AG04450 (cell line): ENCODE measurements at regions of chr15 and their contacts with region 1.

Region 1: DNA sequence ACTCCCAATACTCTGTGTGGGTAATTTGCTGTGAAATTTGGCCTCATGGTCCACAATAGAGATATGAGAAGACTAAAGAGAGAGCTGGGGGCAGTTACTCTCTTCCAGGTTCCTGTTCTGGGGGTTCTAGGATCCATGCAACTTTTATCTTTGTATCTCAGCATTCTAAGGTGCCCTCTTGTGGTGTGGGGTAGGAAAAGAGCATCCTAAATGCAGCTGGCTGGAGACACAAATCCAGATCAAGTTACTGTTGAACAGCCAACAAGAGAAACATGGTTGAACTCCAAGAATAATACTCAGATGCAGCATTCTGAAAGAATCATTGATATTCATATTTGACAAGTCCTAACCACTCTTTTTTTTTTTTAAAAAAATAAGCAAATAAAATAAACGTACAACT is 238.2 kb downstream of the GREM1 start:
- DNase-seq: peak; percentile 81
- H3K4me3 ChIP-seq: no peak overlapping the region
- H3K27ac ChIP-seq: no peak overlapping the region
- H3K27me3 ChIP-seq: no peaks in the 10 kb centered on the region
- CTCF ChIP-seq: peak; percentile 79

Region 2: DNA sequence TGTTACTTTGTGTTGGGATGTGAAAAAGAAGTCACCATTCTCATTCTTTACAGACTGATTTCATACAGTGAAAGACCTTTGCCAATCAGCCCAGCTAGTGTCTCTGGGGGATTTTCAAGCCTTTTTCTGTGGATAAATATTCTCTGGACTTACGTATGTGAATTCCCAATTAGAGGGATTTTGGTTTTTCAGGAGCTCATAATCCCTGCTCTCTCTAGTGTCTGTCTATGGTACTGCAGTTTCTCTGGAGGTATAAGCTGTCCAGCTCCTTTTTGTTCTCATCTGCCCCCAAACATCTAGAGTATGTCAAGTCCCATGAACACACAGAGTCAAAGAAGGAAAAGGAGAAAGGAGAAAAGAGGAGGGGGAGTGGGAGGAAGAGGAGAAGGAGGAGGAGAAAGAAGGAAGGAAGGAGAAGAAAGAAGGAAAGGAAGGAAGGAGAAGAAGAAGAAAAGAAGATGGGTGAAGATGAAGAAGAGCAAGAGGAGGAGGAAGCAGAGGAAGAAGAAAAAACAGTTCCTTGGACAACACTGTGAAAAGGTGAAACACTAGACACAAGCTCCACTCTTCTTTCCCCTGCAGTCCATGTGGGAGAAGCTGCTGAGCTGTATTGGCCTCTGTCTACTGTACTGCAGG is 19.6 kb before region 1 on chr15:
- CTCF ChIA-PET with region 1: interaction called, 14 read pairs
- POLR2A ChIA-PET with region 1: no interaction called
- DNase-seq: no peak
- H3K4me3 ChIP-seq: no peak overlapping the region
- H3K27ac ChIP-seq: no peak overlapping the region
- H3K27me3 ChIP-seq: no peaks in the 10 kb centered on the region
- CTCF ChIP-seq: peak; percentile 47

Region 3: DNA sequence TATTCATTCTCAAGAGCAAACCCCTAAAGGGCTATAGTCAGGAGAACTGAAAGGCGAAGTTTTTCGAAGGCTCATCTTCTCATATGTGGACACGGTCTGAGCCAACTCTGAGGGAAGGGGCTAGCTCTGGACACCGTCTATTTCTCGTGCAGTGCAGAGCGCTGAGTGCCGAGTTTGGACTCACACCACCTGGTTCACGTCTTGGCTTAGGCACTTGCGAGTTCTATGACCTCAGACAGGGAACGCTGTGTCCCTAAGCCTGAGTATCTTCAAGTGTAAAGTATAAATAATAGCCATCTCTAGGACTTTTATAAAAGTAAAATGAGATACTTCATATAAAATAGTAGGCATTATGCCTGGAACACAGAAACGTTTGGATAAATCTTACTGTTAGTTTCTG is 14.8 kb after region 1 on chr15:
- CTCF ChIA-PET with region 1: interaction called, 13 read pairs
- POLR2A ChIA-PET with region 1: no interaction called
- DNase-seq: no peak
- H3K4me3 ChIP-seq: no peak overlapping the region
- H3K27ac ChIP-seq: no peak overlapping the region
- H3K27me3 ChIP-seq: no peaks in the 10 kb centered on the region
- CTCF ChIP-seq: no peak